ENCODE measurements at regions of chr7 and their contacts with region 1.

Region 1: GRCh38 chr7:154927624-154928143 is 75.2 kb downstream of the PAXIP1 start:
- DNase-seq: peak; percentile 32
- ATAC-seq: peak; percentile 59
- H3K4me3 Mint-ChIP-seq: peak overlapping the region; percentile 96
- H3K27ac Mint-ChIP-seq: peak overlapping the region; percentile 99
- H3K4me1 Mint-ChIP-seq: peaks cover 28% of the 10 kb centered on the region
- H3K27me3 Mint-ChIP-seq: no peaks in the 10 kb centered on the region
- CTCF ChIP-seq: peak; percentile 22

Region 2: DNA sequence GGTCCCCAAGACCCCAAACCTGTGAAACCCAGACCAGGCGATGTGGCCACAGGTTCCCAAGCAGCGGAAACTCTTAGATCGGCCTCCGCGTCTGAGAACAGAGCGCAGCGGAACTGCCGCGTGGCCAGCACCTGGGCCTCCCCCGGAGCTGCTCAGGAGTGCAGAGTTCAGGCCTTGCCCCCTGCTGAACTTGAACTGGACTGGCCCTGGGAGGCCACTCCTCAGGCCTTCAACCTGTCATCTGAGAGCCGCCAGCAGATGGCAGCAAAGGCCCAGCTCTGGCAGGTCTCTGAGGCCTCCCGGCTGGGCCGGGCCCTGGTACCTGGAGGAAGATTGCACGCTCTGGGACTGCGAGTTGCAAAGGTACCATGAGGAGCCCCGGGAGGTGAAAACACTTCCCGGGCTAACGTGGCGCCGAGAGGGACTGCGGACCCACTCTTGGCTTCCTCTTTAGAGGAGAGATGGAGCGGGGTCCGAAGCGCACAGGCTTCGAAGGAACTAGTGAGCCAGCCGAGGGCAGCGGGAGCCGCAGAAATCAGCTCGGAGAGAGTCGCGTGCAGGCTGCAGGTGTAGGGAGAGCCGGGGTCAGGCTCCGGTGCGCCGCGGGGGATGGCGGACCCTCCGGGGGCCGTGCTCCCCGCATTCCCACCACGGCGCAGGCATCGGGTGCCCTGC is 13.9 kb before region 1 on chr7:
- CTCF ChIA-PET with region 1: interaction called, 25 read pairs
- POLR2A ChIA-PET with region 1: interaction called, 4 read pairs
- intact Hi-C with region 1: no loop called
- DNase-seq: peak; percentile 86
- ATAC-seq: peak; percentile 94
- H3K4me3 Mint-ChIP-seq: peak overlapping the region; percentile 84
- H3K27ac Mint-ChIP-seq: no peak overlapping the region
- H3K4me1 Mint-ChIP-seq: peaks cover 3% of the 10 kb centered on the region
- H3K27me3 Mint-ChIP-seq: peaks cover 25% of the 10 kb centered on the region
- CTCF ChIP-seq: peak; percentile 26

Region 3: GRCh38 chr7:154953006-154953684 is 25.5 kb after region 1 on chr7:
- CTCF ChIA-PET with region 1: interaction called, 31 read pairs
- POLR2A ChIA-PET with region 1: no interaction called
- intact Hi-C with region 1: loop called (anchors 1 kb)
- DNase-seq: peak; percentile 41
- ATAC-seq: no peak
- H3K4me3 Mint-ChIP-seq: no peak overlapping the region
- H3K27ac Mint-ChIP-seq: no peak overlapping the region
- H3K4me1 Mint-ChIP-seq: no peaks in the 10 kb centered on the region
- H3K27me3 Mint-ChIP-seq: no peaks in the 10 kb centered on the region
- CTCF ChIP-seq: no peak

Region 4: DNA sequence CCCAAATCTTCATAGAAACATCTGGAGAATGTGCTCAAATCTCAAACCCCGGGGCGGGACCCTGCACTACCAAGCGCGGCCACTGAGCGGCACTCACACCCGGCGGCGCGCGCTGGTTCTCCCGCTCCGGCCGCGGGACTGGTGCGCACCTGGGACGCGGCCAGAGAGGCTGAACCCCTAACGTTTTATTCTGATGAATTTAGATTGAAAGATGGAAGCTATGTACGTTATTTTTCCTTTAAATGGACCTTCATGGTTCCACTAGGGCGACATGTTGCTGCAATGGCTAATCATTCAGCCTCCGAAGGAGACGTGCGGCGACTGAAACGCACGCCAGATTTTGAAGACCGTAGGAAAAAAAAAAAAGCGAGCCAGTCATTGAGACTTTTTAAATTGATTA is 263.0 kb after region 1 on chr7:
- CTCF ChIA-PET with region 1: interaction called, 7 read pairs
- POLR2A ChIA-PET with region 1: no interaction called
- intact Hi-C with region 1: loop called (anchors 1 kb)
- DNase-seq: peak; percentile 70
- ATAC-seq: peak; percentile 94
- H3K4me3 Mint-ChIP-seq: no peak overlapping the region
- H3K27ac Mint-ChIP-seq: no peak overlapping the region
- H3K4me1 Mint-ChIP-seq: peaks cover 8% of the 10 kb centered on the region
- H3K27me3 Mint-ChIP-seq: peaks cover 7% of the 10 kb centered on the region
- CTCF ChIP-seq: no peak

Region 5: GRCh38 chr7:155344600-155345433 is 417.1 kb after region 1 on chr7:
- CTCF ChIA-PET with region 1: interaction called, 34 read pairs
- POLR2A ChIA-PET with region 1: interaction called, 15 read pairs
- intact Hi-C with region 1: loop called (anchors 1 kb)
- DNase-seq: peak; percentile 87
- ATAC-seq: peak; percentile 77
- H3K4me3 Mint-ChIP-seq: peak overlapping the region; percentile 79
- H3K27ac Mint-ChIP-seq: no peak overlapping the region
- H3K4me1 Mint-ChIP-seq: peaks cover 13% of the 10 kb centered on the region
- H3K27me3 Mint-ChIP-seq: no peaks in the 10 kb centered on the region
- CTCF ChIP-seq: peak; percentile 77

Region 6: DNA sequence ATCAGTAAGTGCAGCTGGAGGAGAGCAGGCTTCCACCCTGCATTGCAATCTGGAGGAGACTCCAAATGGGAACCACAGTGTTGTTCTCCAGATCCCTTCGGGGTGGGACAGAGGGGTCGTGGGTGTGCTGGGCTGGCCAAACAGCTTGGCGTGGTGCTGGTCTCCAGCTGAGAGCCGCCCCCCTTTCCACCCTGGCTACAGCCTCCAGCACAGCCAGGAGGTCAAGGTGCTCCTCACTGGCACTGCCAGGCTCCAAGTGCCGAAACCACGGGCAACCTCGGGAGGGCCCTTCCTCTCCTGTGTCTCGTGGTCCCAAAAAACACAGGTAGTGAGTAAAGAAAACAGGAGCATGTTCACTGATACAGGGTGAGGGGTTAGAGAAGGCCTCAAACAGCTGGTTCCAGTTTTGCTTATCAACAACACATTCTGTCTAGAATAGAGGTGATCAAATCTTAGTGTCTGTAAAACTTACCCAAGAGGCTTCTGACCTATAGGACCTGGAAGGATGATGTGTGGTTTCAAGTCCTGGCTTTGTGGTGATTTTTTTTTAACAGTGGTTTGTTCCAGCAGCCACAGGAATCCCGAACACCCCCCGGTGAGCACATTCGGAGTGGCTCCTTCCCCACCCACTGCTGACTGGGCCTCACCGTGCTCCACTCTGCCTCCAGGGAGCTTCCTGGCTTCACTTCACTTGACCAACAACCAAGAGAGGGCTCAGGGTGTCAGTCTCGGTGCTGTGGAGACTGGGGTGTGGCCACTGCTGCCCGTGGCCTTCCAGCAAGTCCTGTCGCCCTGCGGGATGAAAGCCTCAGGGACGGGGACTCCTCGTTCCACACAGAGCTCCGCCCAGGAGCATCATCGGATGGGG is 499.1 kb after region 1 on chr7:
- CTCF ChIA-PET with region 1: no interaction called
- POLR2A ChIA-PET with region 1: no interaction called
- intact Hi-C with region 1: no loop called
- DNase-seq: no peak
- ATAC-seq: no peak
- H3K4me3 Mint-ChIP-seq: no peak overlapping the region
- H3K27ac Mint-ChIP-seq: no peak overlapping the region
- H3K4me1 Mint-ChIP-seq: no peaks in the 10 kb centered on the region
- H3K27me3 Mint-ChIP-seq: peaks cover 19% of the 10 kb centered on the region
- CTCF ChIP-seq: no peak

Region 7: DNA sequence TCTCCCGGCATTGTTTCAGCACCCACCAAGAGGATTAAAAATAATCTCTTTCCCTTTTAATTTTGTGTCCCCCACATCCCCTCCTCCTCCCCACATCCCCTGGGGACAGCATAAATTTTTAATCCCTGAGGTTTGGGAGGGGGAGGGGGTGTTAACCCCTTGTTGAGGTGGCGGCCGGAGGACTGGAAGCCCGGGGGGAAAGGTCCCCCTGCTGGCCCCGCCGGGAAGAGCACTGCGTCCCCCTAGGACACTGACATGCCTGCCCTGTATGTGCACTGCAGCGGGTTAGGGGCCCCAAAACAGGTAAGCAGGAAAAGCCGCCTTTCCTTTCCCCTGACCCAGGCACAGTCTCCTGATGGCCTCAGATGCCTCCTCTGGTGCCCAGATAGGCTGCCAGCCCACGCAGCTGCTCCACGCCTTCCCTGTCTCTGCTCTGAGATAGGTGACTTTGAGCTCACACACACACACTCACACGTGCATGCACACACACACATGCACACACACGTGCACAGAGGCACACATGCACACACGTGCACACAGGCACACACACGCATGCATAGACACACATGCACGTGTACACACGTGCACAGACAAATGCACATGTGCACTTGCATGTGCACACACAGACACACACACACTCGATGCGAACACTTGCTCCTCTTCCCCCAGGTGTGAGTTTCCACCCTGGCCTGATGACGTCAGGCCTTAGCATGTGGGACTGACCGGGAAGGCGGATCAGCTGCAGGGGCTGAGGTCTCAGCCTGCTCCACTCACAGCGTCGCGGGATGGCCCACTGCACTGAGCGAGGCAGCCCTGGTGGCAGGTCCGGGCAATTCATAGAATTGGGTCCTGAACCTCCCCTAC is 606.4 kb after region 1 on chr7:
- CTCF ChIA-PET with region 1: interaction called, 7 read pairs
- POLR2A ChIA-PET with region 1: no interaction called
- intact Hi-C with region 1: loop called (anchors 1 kb)
- DNase-seq: no peak
- ATAC-seq: peak; percentile 65
- H3K4me3 Mint-ChIP-seq: peak overlapping the region; percentile 69
- H3K27ac Mint-ChIP-seq: no peak overlapping the region
- H3K4me1 Mint-ChIP-seq: peaks cover 15% of the 10 kb centered on the region
- H3K27me3 Mint-ChIP-seq: peaks cover 66% of the 10 kb centered on the region
- CTCF ChIP-seq: no peak

Region 8: DNA sequence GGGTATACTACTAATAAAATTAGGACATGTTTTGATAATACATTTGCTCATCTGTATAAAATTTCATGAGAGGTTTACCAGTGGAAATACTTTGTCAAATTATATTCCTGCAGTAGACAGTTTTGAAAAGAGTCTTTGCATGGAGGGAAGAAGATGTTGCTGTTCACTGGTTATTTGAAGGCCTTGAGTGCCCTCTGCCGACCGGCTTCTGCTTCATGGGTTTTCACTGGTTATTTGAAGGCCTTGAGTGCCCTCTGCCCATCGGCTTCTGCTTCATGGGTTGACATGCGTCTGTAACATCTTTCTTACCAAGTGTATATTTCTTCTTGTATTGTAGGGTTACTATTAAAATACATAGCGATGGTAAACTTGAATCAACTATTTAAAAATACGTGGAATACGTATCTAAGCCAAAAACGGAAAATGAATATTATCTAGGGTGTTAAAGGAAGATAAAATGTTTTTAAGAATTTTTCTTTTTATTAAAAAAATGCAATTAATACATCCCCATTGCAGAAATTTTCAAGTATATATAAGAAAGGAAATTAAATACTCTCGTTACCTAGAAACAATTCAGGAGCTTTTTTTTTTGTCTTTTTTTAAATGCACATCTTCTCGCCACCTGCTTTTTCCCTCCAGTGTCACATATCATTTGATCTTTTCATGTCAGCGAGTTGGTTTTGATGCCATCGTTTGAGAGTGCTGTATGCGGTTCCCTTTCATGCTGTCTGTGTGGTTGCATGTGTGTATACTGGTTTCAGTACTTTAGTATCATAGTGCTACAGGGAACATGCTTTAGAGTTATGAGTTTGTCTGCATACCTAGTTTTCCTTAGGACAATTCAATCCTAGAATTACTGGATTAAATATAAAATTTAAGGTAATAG is 811.2 kb after region 1 on chr7:
- CTCF ChIA-PET with region 1: interaction called, 5 read pairs
- POLR2A ChIA-PET with region 1: no interaction called
- intact Hi-C with region 1: loop called (anchors 1 kb)
- DNase-seq: peak; percentile 42
- ATAC-seq: peak; percentile 64
- H3K4me3 Mint-ChIP-seq: no peak overlapping the region
- H3K27ac Mint-ChIP-seq: no peak overlapping the region
- H3K4me1 Mint-ChIP-seq: peaks cover 58% of the 10 kb centered on the region
- H3K27me3 Mint-ChIP-seq: no peaks in the 10 kb centered on the region
- CTCF ChIP-seq: peak; percentile 30

Measured in activated B cell treated with CpG ODN at 0.5 μM for 24 hours (primary cell).